Esophagus muscularis mucosa (tissue), 4 donors: ENCODE measurements at regions of chr9 and their contacts with region 1.

Region 1: GRCh38 chr9:84397151-84397728 is 56.7 kb upstream of the SLC28A3 start:
- DNase-seq: no peak
- H3K4me3 ChIP-seq: no peak overlapping the region
- H3K27ac ChIP-seq: no peak overlapping the region
- H3K4me1 ChIP-seq: peaks cover 0 to 6% (median 1%) of the 10 kb centered on the region in 4 donors
- H3K27me3 ChIP-seq: peaks cover 0 to 26% (median 0%) of the 10 kb centered on the region in 4 donors
- CTCF ChIP-seq: peak; percentile 86 to 95 (median 86)
- EP300 ChIP-seq: no peak
- POLR2A ChIP-seq: no peak

Region 2: DNA sequence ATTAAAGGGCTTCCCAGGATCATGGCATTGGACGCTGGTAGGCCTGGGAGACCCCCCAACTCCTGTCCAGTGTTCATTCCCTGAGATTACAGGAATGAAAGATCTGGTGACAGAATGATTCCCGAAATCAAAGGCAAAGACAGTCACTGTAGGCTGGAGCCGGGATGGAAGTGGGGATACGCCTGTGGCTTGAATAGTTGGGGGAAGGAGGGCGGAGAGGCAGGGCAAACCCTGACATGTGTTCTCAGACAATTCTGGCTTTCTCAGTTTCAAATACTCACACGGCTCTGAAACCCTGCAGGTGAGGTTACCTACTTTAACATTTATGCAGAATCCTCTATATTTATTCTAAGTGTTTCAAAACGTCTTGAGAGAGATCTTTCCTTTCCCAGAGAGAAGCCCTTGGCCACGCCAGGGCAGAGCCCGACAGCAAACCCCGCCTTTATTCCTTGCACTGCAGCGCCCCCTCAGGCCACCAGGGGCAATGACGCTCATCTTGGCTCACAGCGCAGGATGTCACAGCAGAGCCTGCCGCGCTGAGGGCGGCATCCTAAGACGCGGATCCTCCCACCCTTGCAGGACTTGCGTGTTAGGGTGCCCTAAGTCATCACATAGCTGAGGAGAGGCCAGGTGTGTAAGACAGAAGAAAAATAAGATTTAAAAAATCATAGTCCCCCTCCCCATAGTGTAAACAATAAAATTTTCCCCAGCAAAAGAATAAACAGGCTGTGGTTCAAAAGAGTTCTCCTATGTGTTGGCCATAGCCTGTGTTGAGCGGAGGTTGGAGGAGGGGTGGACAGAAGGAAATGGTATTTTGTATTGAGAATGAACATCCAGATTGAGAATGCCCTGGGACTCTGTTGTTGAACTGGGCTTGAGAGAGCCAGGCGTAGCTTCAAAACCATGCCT is 556.8 kb after region 1 on chr9:
- intact Hi-C with region 1: loop called (anchors 5 kb)
- DNase-seq: no peak
- H3K4me3 ChIP-seq: no peak overlapping the region
- H3K27ac ChIP-seq: no peak overlapping the region
- H3K4me1 ChIP-seq: peaks cover 4 to 8% (median 7%) of the 10 kb centered on the region in 4 donors
- H3K27me3 ChIP-seq: no peaks in the 10 kb centered on the region
- CTCF ChIP-seq: peak; percentile 79 to 96 (median 93)
- EP300 ChIP-seq: no peak
- POLR2A ChIP-seq: no peak

Region 3: GRCh38 chr9:85142968-85143367 is 745.7 kb after region 1 on chr9:
- intact Hi-C with region 1: loop called (anchors 5 kb)
- DNase-seq: no peak
- H3K4me3 ChIP-seq: no peak overlapping the region
- H3K27ac ChIP-seq: no peak overlapping the region
- H3K4me1 ChIP-seq: peaks cover 0 to 3% (median 0%) of the 10 kb centered on the region in 4 donors
- H3K27me3 ChIP-seq: no peaks in the 10 kb centered on the region
- CTCF ChIP-seq: peak; percentile 21 to 50 (median 22)
- EP300 ChIP-seq: no peak
- POLR2A ChIP-seq: no peak

Region 4: DNA sequence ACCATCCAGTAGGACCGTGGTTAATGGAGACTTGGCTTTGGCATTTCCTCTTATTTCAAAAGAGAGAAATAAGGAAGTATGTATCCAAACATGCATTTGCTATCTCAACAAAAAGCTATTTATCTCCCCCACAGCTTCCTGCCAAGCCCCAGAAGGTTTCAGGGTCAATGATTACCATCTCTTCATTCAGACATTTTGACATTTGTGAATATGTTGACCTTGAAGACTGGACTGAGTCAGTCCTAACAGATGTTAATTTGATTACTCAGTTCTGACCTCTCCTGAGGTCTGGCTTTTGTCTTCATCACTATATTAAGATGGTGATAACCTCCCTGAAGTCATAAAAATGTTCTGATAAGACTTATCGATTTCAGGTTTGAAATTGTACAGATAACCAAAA is 865.1 kb after region 1 on chr9:
- intact Hi-C with region 1: loop called (anchors 10 kb)
- DNase-seq: no peak
- H3K4me3 ChIP-seq: no peak overlapping the region
- H3K27ac ChIP-seq: no peak overlapping the region
- H3K4me1 ChIP-seq: no peaks in the 10 kb centered on the region
- H3K27me3 ChIP-seq: peaks cover 0 to 8% (median 0%) of the 10 kb centered on the region in 4 donors
- CTCF ChIP-seq: no peak
- EP300 ChIP-seq: no peak
- POLR2A ChIP-seq: no peak

Region 5: DNA sequence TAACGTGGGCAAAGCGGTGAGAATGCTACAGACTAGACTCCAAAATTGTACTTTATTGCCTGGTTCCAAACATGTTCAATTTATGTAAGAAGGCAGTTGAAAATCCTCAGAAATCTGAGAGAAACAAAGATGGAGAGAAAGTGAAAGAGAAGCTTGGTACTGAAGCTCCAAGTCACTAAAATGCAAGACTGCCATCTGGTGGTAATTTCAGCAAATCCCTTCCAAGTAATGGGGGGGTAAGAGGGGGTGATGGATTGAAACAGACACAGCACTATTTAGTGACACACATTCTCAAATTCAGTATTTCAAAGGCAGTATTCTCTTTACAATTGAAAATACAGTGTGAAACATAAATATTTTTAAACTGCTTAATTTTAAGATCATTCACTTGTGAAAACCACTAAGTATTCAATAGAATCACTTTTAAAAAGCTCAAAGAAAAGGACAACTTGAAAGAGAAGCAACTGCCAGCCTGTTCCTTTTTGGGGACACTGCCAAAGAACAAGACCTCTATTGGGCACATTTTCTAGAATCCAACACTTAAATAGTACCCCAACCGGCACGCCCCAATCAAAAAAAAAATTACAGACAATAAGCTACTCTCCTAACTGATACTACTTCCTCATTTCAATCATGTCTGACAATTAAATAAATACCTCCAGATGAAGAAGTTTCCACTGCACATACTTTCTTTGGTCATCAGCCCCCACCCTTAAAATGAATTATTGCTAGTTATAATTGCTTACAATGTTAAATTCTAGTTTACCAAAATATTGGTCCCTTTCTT is 1213.0 kb after region 1 on chr9:
- intact Hi-C with region 1: loop called (anchors 5 kb)
- DNase-seq: no peak
- H3K4me3 ChIP-seq: peak overlapping the region; percentile 11 to 23 (median 20)
- H3K27ac ChIP-seq: no peak overlapping the region
- H3K4me1 ChIP-seq: peaks cover 0 to 5% (median 0%) of the 10 kb centered on the region in 4 donors
- H3K27me3 ChIP-seq: no peaks in the 10 kb centered on the region
- CTCF ChIP-seq: peak; percentile 73 to 86 (median 80)
- EP300 ChIP-seq: no peak
- POLR2A ChIP-seq: no peak